Activated CD8-positive, alpha-beta T cell treated with anti-CD3 and anti-CD28 coated beads, Interleukin-2, amount 10 ng/mL, durations not matched to agents 7 days and 5 days (primary cell): ENCODE measurements at regions of chr7 and their contacts with region 1.

Region 1: DNA sequence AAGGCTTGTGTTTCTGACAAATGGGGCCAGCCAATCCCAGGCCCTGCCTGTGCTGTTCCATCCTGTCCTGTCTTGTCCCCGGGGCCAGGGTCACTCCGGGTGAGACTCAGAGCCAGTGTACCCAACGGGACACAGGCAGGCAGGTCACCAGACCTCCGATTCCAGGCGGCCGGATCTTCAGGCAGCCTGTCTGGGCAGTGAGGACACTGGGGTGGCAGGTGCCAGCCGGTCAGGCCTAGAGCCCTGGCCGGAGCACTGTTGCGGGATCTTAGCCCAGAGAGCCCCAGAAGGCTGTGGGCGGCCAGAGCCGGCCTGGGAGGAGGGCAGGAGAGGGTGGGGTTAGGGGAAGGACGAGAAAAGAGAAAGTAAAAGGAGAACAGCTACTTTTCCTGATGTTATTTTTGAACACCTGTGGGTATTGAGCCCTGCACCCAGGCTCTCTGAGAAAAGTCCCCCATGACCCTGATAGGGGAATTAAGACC is 134.3 kb upstream of the TNRC18 start:
- DNase-seq: peak; percentile 39
- ATAC-seq: peak; percentile 21
- H3K4me3 Mint-ChIP-seq: peak overlapping the region; percentile 81
- H3K27ac Mint-ChIP-seq: peak overlapping the region; percentile 90
- H3K4me1 Mint-ChIP-seq: peaks cover 55% of the 10 kb centered on the region
- H3K27me3 Mint-ChIP-seq: peaks cover 7% of the 10 kb centered on the region

Region 2: GRCh38 chr7:5375925-5376324 is 182.0 kb before region 1 on chr7:
- CTCF ChIA-PET with region 1: no interaction called
- POLR2A ChIA-PET with region 1: no interaction called
- DNase-seq: no peak
- ATAC-seq: peak; percentile 12
- H3K4me3 Mint-ChIP-seq: no peak overlapping the region
- H3K27ac Mint-ChIP-seq: peak overlapping the region; percentile 45
- H3K4me1 Mint-ChIP-seq: peaks cover 4% of the 10 kb centered on the region
- H3K27me3 Mint-ChIP-seq: no peaks in the 10 kb centered on the region

Region 3: DNA sequence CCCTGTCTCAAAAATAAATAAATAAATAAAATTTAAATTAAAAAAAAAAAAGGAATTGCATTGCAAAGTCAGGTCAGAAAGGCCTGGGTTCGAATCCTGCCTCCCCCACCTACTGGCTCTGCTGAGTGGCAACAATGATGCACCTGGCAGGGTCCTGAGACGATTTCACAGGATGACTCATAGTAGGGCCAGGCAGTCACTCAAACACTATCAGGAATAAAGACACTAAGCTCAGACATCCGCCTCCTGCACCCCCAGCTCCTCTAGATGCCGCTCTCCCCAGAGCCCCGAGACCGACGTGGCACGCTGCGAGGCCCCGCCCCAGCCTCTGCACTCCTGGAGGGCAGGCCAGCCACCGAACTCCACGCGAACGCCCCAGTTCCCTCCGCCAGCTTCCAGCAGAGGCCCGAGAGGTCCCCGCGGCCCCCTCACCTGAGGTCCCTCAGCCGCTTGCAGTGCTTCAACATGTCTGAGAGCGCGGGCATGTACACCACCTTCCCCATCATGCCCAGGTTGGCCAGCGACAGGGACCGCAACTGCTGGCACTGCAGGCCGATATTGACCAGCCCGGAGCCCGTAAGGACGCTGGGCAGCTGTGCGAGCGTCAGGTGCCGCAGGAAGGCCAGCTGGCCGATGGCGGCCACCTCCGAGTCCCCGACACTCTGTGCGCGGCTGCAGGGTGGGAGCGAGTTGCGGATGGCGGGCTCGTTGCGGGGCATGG is 57.7 kb before region 1 on chr7:
- CTCF ChIA-PET with region 1: interaction called, 13 read pairs
- POLR2A ChIA-PET with region 1: interaction called, 4 read pairs
- DNase-seq: no peak
- ATAC-seq: no peak
- H3K4me3 Mint-ChIP-seq: no peak overlapping the region
- H3K27ac Mint-ChIP-seq: no peak overlapping the region
- H3K4me1 Mint-ChIP-seq: peaks cover 21% of the 10 kb centered on the region
- H3K27me3 Mint-ChIP-seq: no peaks in the 10 kb centered on the region

Region 4: DNA sequence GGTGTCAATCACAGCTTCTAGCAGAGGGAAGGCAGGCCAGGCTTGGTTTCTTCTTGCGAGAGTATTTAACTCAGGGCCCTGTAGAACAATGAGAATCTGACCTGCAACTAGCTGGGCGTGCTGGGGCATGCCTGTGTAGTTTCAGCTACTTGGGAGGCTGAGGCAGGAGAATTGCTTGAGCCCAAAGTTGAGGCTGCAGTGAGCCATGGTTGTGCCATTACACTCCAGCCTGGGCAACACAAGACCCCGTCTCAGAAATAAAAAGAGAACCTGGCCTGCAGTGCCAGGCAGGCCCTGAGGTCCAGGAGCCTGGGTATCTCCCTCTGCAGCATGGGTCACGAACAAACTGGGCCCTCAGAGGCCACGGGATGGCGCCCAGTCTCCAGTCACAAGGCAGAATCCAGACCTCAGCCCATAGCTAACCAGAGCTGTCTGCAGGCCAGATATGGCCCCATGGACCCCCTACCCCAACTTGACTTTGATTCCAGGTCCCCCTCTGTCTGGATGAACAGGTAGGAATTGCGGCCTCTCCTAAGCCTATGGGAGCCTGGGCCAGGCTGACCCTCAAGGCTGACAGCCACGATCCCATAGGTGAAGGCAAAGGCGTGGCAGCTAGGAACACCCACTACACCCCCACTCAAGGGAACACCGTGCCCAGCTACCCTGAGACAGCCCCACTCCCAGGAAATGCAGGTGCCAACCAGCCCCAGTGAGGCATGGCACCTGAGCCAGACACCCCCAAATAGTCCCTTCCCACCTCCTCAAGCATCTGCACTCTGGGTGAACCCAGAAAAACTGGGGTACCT is 31.7 kb before region 1 on chr7:
- CTCF ChIA-PET with region 1: interaction called, 38 read pairs
- POLR2A ChIA-PET with region 1: interaction called, 6 read pairs
- DNase-seq: peak; percentile 55
- ATAC-seq: no peak
- H3K4me3 Mint-ChIP-seq: peak overlapping the region; percentile 96
- H3K27ac Mint-ChIP-seq: peak overlapping the region; percentile 100
- H3K4me1 Mint-ChIP-seq: peaks cover 24% of the 10 kb centered on the region
- H3K27me3 Mint-ChIP-seq: peaks cover 1% of the 10 kb centered on the region

Region 5: DNA sequence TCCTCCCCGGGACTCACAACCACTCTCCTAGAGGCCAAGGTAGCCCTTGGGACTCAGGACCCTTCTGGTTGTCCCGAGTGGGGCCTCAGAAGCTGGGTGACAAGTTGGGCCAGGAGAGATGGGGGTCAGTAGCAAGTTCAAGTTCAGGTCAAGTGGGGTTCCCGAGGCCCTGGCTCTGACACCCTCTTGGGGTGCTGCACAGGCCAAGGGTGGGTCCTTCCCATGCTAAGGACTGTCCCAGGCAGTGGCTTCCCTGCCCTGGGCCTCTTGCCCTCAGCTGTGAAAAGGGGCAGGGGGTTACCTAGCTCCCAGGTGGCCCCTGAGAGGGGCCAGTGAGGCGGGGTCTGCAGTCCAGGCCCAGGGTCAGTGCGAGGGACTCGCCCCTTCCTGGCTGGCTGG is 18.9 kb before region 1 on chr7:
- CTCF ChIA-PET with region 1: interaction called, 11 read pairs
- POLR2A ChIA-PET with region 1: no interaction called
- DNase-seq: no peak
- ATAC-seq: peak; percentile 16
- H3K4me3 Mint-ChIP-seq: peak overlapping the region; percentile 10
- H3K27ac Mint-ChIP-seq: peak overlapping the region; percentile 57
- H3K4me1 Mint-ChIP-seq: peaks cover 20% of the 10 kb centered on the region
- H3K27me3 Mint-ChIP-seq: no peaks in the 10 kb centered on the region